Motor neuron (in vitro differentiated cells): ENCODE measurements at regions of chr1 and their contacts with region 1.

Region 1: GRCh38 chr1:35192853-35193664 is at the start of gene SFPQ:
- ATAC-seq: peak; percentile 88 to 92 (median 90)
- H3K4me3 ChIP-seq: peak within 1 kb of the TSS; percentile 74 to 97 (median 94)
- H3K27ac ChIP-seq: peak within 1 kb of the TSS; percentile 97 to 99
- H3K4me1 ChIP-seq: peaks cover 23 to 29% of the 10 kb centered on the region in 2 donors
- total RNA-seq, gene SFPQ: 165 to 606 (median 223) TPM

Region 2: DNA sequence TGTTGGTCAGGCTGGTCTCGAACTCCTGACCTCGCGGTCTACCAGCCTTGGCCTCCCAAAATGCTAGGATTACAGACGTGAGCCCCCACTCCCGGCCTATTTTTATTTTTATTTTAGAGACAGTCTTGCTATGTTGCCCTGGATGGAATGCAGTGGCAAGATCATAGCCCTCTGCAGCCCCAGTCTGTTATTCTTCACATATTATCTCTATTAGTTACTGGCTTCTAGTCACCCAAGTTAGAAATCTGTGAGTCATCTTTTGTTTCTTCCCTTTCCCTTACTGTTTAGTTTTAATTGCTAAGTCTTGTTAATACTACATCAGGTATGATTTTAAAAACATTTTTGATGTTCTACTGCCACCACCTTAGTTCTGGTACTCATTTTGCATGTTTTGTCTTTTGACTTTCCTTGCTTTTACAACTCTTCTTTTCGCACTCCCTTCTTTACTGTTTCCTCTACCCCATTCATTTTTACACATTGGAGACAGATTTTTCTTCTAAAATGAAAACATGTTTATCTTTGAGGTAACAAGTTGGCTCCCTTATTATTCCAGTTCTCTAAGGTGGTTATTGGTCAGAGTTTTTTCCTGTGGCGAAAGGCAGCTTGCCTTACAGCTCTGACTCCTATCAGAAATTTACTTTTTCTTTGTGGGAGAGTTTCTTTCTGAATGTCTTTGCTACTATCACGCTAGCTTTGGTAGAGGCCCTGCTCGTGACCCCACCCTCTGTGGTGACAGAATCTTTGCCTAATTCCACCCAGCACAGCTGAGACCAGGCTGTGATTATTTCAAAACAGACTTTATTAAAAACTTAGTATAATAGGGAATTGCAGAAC is 95.0 kb after region 1 on chr1:
- in situ Hi-C with region 1: loop called in 3 of 9 experiments (anchors 10 to 25 kb)
- ATAC-seq: peak in 3 of 8 experiments; percentile 54 to 91 (median 85)
- H3K4me3 ChIP-seq: no peak overlapping the region
- H3K27ac ChIP-seq: no peak overlapping the region
- H3K4me1 ChIP-seq: peaks cover 0 to 5% of the 10 kb centered on the region in 2 donors

Region 3: GRCh38 chr1:35390600-35391494 is 197.8 kb after region 1 on chr1:
- in situ Hi-C with region 1: no loop called
- ATAC-seq: peak in 2 of 8 experiments; percentile 43 to 90
- H3K4me3 ChIP-seq: no peak overlapping the region
- H3K27ac ChIP-seq: no peak overlapping the region
- H3K4me1 ChIP-seq: no peaks in the 10 kb centered on the region